CD8-positive, alpha-beta T cell (primary cell): ENCODE measurements at regions of chr4 and their contacts with region 1.

Region 1: DNA sequence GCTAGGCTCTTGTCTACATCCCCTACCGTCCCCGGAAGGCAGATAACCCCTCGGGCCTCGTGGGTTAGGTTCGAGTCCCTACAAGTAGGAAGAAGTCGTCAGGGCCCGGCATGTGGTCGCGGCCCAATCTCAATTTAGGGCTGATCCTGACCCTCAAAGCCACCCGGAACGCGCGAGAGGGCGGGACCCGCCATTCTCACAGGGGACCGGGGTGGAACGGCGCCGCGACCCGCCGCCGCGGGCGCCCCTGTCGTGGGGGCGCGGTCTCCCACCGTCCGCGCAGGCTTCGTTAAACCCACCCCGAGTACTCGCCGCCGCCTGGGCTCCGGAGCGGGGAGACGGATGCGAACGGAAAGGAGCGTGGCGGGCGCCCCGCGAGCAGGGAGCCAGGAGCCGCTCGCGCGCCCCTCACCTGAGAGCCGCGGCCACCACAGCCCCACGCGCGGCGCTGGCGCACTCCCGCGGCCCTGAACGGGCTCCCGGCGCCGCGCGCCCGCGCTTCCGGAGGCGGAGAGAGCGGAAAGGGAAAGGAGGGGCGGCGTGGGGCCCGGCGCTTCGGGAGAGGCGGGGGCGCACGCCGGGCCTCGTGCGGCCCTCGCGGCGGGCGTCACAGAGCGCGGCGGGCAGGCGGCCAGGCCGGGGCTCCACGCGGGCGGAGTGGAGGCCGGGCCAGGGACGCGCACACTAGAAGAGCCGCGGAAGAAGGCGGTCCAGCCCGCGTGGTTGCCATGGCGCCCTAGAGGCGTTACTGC is at the start of gene CFAP97:
- DNase-seq: peak; percentile 67 to 95 (median 82)
- ATAC-seq: peak; percentile 79
- H3K4me3 ChIP-seq: peak within 1 kb of the TSS; percentile 64 to 83
- H3K4me3 Mint-ChIP-seq: peak within 1 kb of the TSS; percentile 91
- H3K27ac ChIP-seq: peak within 1 kb of the TSS; percentile 83 to 87
- H3K27ac Mint-ChIP-seq: peak within 1 kb of the TSS; percentile 98
- H3K4me1 ChIP-seq: peaks cover 29% of the 10 kb centered on the region
- H3K4me1 Mint-ChIP-seq: peaks cover 49% of the 10 kb centered on the region
- H3K27me3 ChIP-seq: no peaks in the 10 kb centered on the region
- H3K27me3 Mint-ChIP-seq: no peaks in the 10 kb centered on the region
- CTCF ChIP-seq: no peak
- total RNA-seq, gene CFAP97: 18.8 to 20.4 TPM

Region 2: DNA sequence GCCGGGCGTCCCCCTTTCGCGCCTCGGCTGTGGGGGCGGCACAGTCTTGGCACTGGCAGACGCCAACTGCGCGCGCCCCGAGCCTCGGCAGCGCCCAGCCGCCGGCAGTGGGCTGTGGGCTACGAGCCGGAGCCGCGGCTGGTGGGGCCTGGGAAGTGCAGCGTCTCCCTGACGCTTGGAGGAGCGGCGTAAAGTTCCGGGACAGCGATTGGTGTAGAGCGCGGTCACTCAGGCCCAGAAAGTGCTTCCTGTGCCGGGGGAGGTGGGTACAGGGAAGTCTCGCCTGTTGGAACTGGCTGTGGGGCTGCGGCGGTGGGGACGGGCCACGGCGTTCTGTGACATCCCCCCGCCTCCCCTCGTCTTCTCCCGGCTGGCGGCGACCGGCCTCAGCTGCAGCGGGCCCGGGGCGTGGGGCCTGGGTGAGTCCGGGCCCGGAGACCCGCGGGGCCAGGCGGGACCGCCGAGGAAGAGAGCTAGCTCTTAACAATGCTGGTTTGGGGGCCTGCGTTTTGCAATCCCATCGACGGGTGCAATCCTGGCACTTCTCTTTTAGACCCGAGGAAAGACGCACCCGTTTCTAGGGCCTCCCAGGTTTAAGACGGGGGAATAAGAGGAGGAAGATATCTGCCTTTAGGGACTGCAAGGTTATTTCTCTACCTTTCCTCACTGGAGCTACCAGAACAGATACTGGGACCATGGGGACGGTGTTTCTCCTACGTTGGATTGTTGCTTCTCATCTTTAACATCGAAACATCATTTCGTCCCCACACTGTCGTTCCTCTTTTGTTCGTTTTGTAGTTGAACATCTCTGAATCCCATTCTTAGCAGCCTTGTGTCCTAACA is 1544.4 kb before region 1 on chr4 and contains the starts of genes RWDD4 and TRAPPC11:
- CTCF ChIA-PET with region 1: no interaction called
- POLR2A ChIA-PET with region 1: no interaction called
- intact Hi-C with region 1: loop called in 1 of 2 experiments (anchors 10 kb)
- DNase-seq: peak; percentile 90 to 99 (median 95)
- ATAC-seq: peak; percentile 96
- H3K4me3 ChIP-seq: peak within 1 kb of the TSS; percentile 72 to 83
- H3K4me3 Mint-ChIP-seq: peak within 1 kb of the TSS; percentile 92
- H3K27ac ChIP-seq: peak within 1 kb of the TSS; percentile 83 to 89
- H3K27ac Mint-ChIP-seq: peak within 1 kb of the TSS; percentile 91
- H3K4me1 ChIP-seq: peaks cover 25% of the 10 kb centered on the region
- H3K4me1 Mint-ChIP-seq: peaks cover 42% of the 10 kb centered on the region
- H3K27me3 ChIP-seq: no peaks in the 10 kb centered on the region
- H3K27me3 Mint-ChIP-seq: no peaks in the 10 kb centered on the region
- CTCF ChIP-seq: no peak
- total RNA-seq, gene RWDD4: 9.0 to 12.1 TPM
- total RNA-seq, gene TRAPPC11: 14.7 to 22.1 TPM

Region 3: GRCh38 chr4:185142912-185143595 is 60.6 kb before region 1 on chr4 and contains the start of gene SLC25A4:
- CTCF ChIA-PET with region 1: no interaction called
- POLR2A ChIA-PET with region 1: interaction called, 10 read pairs
- intact Hi-C with region 1: loop called (anchors 1 to 2 kb)
- DNase-seq: peak; percentile 73 to 94 (median 86)
- ATAC-seq: peak; percentile 93
- H3K4me3 ChIP-seq: peak within 1 kb of the TSS; percentile 65 to 84
- H3K4me3 Mint-ChIP-seq: peak within 1 kb of the TSS; percentile 91
- H3K27ac ChIP-seq: peak within 1 kb of the TSS; percentile 51 to 62
- H3K27ac Mint-ChIP-seq: peak within 1 kb of the TSS; percentile 91
- H3K4me1 ChIP-seq: peaks cover 15% of the 10 kb centered on the region
- H3K4me1 Mint-ChIP-seq: peaks cover 20% of the 10 kb centered on the region
- H3K27me3 ChIP-seq: no peaks in the 10 kb centered on the region
- H3K27me3 Mint-ChIP-seq: peaks cover 8% of the 10 kb centered on the region
- CTCF ChIP-seq: peak; percentile 59
- total RNA-seq, gene SLC25A4: 10.0 to 11.0 TPM

Region 4: DNA sequence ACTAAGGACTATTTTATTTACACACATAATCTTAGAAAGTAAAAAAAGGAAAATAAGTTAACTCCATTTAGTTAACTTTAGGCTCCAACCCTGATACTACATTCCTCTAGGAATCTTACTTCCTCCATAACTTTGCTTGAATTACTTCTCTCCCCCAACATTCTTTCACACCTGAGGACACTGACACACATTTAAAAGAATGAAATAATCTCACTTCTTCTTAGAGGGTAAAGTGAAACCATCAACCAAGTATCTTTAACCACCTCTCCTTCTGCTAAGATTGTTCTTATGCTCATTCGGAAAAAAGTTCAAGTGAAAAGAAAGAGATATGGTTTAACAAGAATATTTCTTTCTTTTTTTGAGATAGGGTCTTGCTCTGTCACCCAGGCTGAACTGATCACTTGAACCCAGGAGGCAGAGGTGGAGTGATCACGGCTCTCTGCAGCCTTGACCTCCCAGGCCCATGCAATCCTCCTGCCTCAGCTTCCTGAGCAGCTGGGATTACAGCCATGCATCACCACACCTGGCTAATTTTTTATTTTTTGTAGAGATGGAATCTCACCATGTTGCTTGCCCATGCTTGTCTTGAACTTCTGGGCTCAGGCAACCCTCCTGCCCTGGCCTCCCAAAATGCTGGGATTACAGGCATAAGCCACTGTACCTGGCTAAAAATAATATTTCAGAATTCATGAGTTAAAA is 32.1 kb before region 1 on chr4:
- CTCF ChIA-PET with region 1: no interaction called
- POLR2A ChIA-PET with region 1: no interaction called
- intact Hi-C with region 1: no loop called
- DNase-seq: no peak
- ATAC-seq: no peak
- H3K4me3 ChIP-seq: no peak overlapping the region
- H3K4me3 Mint-ChIP-seq: no peak overlapping the region
- H3K27ac ChIP-seq: no peak overlapping the region
- H3K27ac Mint-ChIP-seq: no peak overlapping the region
- H3K4me1 ChIP-seq: peaks cover 2% of the 10 kb centered on the region
- H3K4me1 Mint-ChIP-seq: peaks cover 4% of the 10 kb centered on the region
- H3K27me3 ChIP-seq: no peaks in the 10 kb centered on the region
- H3K27me3 Mint-ChIP-seq: peaks cover 3% of the 10 kb centered on the region
- CTCF ChIP-seq: no peak

Region 5: GRCh38 chr4:185304944-185305690 is 101.5 kb after region 1 on chr4:
- CTCF ChIA-PET with region 1: no interaction called
- POLR2A ChIA-PET with region 1: no interaction called
- intact Hi-C with region 1: loop called in 1 of 2 experiments (anchors 10 kb)
- DNase-seq: peak in 5 of 9 experiments; percentile 6 to 50 (median 45)
- ATAC-seq: peak; percentile 94
- H3K4me3 ChIP-seq: no peak overlapping the region
- H3K4me3 Mint-ChIP-seq: no peak overlapping the region
- H3K27ac ChIP-seq: no peak overlapping the region
- H3K27ac Mint-ChIP-seq: no peak overlapping the region
- H3K4me1 ChIP-seq: no peaks in the 10 kb centered on the region
- H3K4me1 Mint-ChIP-seq: no peaks in the 10 kb centered on the region
- H3K27me3 ChIP-seq: no peaks in the 10 kb centered on the region
- H3K27me3 Mint-ChIP-seq: no peaks in the 10 kb centered on the region
- CTCF ChIP-seq: peak; percentile 42

Region 6: DNA sequence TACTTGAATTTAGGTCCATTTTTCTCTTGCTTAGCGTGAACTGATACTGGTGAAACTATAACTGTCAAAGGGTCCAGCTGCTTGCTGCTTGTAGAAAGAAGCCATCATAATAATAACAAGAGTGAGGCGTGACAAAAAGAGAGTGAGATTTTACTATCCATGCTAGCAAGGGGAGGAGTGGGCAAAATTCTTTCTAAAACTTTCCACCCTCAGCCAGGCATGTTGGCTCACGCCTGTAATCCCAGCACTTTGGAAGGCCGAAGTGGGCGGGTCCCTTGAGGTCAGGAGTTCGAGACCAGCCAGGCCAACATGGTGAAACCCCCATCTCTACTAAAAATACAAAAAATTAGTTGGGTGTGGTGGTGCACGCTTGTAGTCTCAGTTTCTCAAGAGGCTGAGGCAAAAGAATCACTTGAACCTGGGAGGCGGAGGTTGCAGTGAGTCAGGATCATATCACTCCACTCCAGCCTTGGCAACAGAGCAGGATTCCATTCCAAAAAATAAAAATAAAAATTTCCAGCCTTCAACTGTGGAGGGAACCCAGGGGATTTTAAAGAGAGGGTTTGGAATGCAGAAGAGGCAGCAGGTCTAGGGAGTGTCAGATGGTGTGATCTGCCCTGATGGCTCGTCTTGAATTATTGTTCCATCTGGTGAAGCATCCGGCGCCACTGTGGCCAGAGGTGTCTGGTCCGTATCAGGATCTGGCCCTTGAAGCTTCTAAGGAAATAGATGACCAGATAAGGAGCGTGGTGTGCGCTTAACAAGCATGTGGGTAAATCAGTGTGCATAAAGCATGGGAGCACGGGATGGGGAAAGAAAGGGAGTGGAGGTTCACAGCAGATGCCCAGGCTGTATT is 140.3 kb after region 1 on chr4:
- CTCF ChIA-PET with region 1: no interaction called
- POLR2A ChIA-PET with region 1: no interaction called
- intact Hi-C with region 1: no loop called
- DNase-seq: no peak
- ATAC-seq: no peak
- H3K4me3 ChIP-seq: no peak overlapping the region
- H3K4me3 Mint-ChIP-seq: no peak overlapping the region
- H3K27ac ChIP-seq: no peak overlapping the region
- H3K27ac Mint-ChIP-seq: peak overlapping the region; percentile 47
- H3K4me1 ChIP-seq: peaks cover 11% of the 10 kb centered on the region
- H3K4me1 Mint-ChIP-seq: peaks cover 30% of the 10 kb centered on the region
- H3K27me3 ChIP-seq: no peaks in the 10 kb centered on the region
- H3K27me3 Mint-ChIP-seq: no peaks in the 10 kb centered on the region
- CTCF ChIP-seq: no peak

Region 7: GRCh38 chr4:185471235-185472102 is 267.8 kb after region 1 on chr4 and contains the start of gene CCDC110:
- CTCF ChIA-PET with region 1: no interaction called
- POLR2A ChIA-PET with region 1: no interaction called
- intact Hi-C with region 1: loop called in 1 of 2 experiments (anchors 5 kb)
- DNase-seq: peak; percentile 79 to 96 (median 88)
- ATAC-seq: peak; percentile 95
- H3K4me3 ChIP-seq: peak within 1 kb of the TSS; percentile 60 to 85
- H3K4me3 Mint-ChIP-seq: peak within 1 kb of the TSS; percentile 93
- H3K27ac ChIP-seq: peak within 1 kb of the TSS; percentile 27 to 34
- H3K27ac Mint-ChIP-seq: peak within 1 kb of the TSS; percentile 67
- H3K4me1 ChIP-seq: peaks cover 13% of the 10 kb centered on the region
- H3K4me1 Mint-ChIP-seq: peaks cover 16% of the 10 kb centered on the region
- H3K27me3 ChIP-seq: no peaks in the 10 kb centered on the region
- H3K27me3 Mint-ChIP-seq: peaks cover 2% of the 10 kb centered on the region
- CTCF ChIP-seq: peak; percentile 64
- total RNA-seq, gene CCDC110: 0.57 TPM in 1 of 2 experiments, not detected in the other